ENCODE measurements at regions of chr19 and their contacts with region 1.

Region 1: DNA sequence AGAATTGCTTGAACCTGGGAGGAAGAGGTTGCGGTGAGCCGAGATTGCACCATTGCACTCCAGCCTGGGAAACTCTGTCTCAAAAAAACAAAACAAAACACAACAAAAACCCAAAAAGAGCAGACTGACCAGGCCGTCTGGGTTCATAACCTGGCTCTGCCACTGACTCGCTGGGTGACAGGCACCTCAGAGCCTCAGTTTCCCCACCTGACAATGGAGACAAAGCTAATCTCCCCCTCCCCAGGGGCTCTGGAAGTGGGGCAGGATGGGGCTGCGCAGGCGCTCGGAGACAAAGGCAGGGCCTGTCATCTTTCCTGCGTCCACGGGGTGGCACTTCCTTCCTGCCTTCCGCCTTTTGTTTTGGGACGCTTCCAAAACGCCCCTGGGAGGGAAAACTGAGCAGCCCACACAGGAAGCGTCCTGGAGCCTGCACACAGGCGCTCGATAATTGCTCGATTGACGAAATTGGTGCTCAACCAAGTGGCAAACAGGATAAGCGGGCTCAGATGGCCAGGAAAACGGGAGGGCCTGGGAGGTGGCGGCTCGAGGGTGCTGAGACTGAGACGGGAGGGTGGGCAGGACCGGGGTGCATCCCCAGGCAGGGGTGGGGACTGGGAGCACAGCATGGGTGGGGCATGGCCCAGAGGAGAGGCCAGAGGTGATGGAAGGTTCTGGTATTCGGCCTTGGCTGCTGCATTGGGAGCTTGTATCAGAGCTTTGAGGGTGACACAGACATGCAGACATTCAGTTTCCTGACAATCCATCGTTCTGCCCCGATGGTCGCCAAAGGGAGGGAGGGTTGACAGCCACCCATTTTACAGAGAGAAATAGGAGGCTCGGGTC is 17.8 kb downstream of the SPC24 start:
- DNase-seq: peak; percentile 42
- ATAC-seq: peak; percentile 33
- H3K4me3 ChIP-seq: no peak overlapping the region
- H3K4me3 Mint-ChIP-seq: peak overlapping the region; percentile 49
- H3K27ac ChIP-seq: no peak overlapping the region
- H3K27ac Mint-ChIP-seq: no peak overlapping the region
- H3K4me1 ChIP-seq: peaks cover 7 to 17% of the 10 kb centered on the region in 2 donors
- H3K4me1 Mint-ChIP-seq: peaks cover 12% of the 10 kb centered on the region
- H3K27me3 ChIP-seq: peaks cover 0 to 39% (median 8%) of the 10 kb centered on the region in 4 experiments
- H3K27me3 Mint-ChIP-seq: peaks cover 19% of the 10 kb centered on the region
- CTCF ChIP-seq: peak; percentile 39

Region 2: GRCh38 chr19:11203194-11204075 is 65.7 kb after region 1 on chr19:
- CTCF ChIA-PET with region 1: interaction called, 8 read pairs
- POLR2A ChIA-PET with region 1: no interaction called
- intact Hi-C with region 1: loop called (anchors 1 kb)
- DNase-seq: no peak
- ATAC-seq: peak; percentile 50
- H3K4me3 ChIP-seq: no peak overlapping the region
- H3K4me3 Mint-ChIP-seq: no peak overlapping the region
- H3K27ac ChIP-seq: no peak overlapping the region
- H3K27ac Mint-ChIP-seq: no peak overlapping the region
- H3K4me1 ChIP-seq: peaks cover 0 to 8% of the 10 kb centered on the region in 2 donors
- H3K4me1 Mint-ChIP-seq: peaks cover 11% of the 10 kb centered on the region
- H3K27me3 ChIP-seq: peaks cover 0 to 3% (median 0%) of the 10 kb centered on the region in 4 experiments
- H3K27me3 Mint-ChIP-seq: peaks cover 3% of the 10 kb centered on the region
- CTCF ChIP-seq: peak; percentile 68